ENCODE measurements at regions of chr10 and their contacts with region 1.

Region 1: GRCh38 chr10:19847321-19847720 is 31.1 kb downstream of the PLXDC2 start:
- DNase-seq: no peak
- H3K4me3 ChIP-seq: no peak overlapping the region
- H3K27ac ChIP-seq: peak overlapping the region; percentile 49 to 70
- H3K4me1 ChIP-seq: no peaks in the 10 kb centered on the region
- H3K27me3 ChIP-seq: no peaks in the 10 kb centered on the region
- CTCF ChIP-seq: no peak
- POLR2A ChIP-seq: no peak

Region 2: GRCh38 chr10:21516242-21517131 is 1669.2 kb after region 1 on chr10:
- intact Hi-C with region 1: loop called (anchors 10 kb)
- DNase-seq: no peak
- H3K4me3 ChIP-seq: peak overlapping the region; percentile 54 to 76 (median 66)
- H3K27ac ChIP-seq: peak overlapping the region; percentile 36 to 81
- H3K4me1 ChIP-seq: peaks cover 0 to 6% of the 10 kb centered on the region in 2 donors
- H3K27me3 ChIP-seq: peaks cover 0 to 18% of the 10 kb centered on the region in 2 donors
- CTCF ChIP-seq: no peak
- POLR2A ChIP-seq: no peak